ENCODE measurements at regions of chr7 and their contacts with region 1.

Region 1: DNA sequence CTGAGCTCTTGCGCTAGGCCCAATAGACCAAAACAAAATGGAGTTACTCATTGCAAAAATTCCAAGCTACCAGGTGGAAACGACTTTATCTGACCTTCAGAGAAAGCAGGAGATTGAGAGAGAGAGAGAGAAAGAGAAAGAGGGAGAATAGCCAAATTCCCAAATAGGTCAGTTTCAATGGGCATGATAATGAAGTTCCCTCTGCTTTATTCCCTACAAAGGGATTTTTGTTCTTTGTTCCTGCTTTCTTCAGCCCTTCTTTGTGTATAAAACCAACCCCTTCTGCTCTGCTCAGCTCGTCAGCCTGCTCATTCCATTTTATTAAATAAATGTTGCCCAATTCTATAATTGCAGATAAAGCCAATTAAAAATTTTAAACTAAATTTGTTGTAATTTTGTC is 45.0 kb upstream of the GPR37 start:
- DNase-seq: no peak
- ATAC-seq: no peak
- H3K4me3 ChIP-seq: no peak overlapping the region
- H3K27ac ChIP-seq: no peak overlapping the region
- H3K4me1 ChIP-seq: no peaks in the 10 kb centered on the region
- H3K27me3 ChIP-seq: no peaks in the 10 kb centered on the region
- CTCF ChIP-seq: no peak

Region 2: GRCh38 chr7:124836173-124836572 is 25.6 kb after region 1 on chr7:
- intact Hi-C with region 1: loop called in 1 of 10 experiments (anchors 2 kb)
- DNase-seq: no peak
- ATAC-seq: no peak
- H3K4me3 ChIP-seq: no peak overlapping the region
- H3K27ac ChIP-seq: no peak overlapping the region
- H3K4me1 ChIP-seq: no peaks in the 10 kb centered on the region
- H3K27me3 ChIP-seq: no peaks in the 10 kb centered on the region
- CTCF ChIP-seq: no peak

Region 3: DNA sequence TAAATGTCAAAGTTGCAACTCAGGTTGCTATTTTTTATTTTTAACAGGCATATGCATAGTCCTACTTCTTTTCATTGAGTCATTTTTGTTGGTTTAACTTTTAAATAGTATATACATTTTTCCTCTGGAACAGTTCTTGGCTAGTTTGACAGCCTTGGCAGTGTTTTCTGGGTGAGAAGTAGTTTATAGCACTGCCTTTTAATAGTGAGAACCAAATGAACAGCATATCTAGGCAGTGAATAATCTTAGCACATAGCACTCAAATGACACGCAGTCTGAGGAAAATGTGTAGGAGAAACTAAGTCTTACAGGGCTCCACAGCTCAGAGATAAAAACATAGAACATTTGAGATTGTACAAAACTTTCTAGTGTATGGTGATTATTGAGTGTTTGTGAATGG is 384.6 kb after region 1 on chr7:
- intact Hi-C with region 1: no loop called
- DNase-seq: no peak
- ATAC-seq: no peak
- H3K4me3 ChIP-seq: no peak overlapping the region
- H3K27ac ChIP-seq: no peak overlapping the region
- H3K4me1 ChIP-seq: no peaks in the 10 kb centered on the region
- H3K27me3 ChIP-seq: no peaks in the 10 kb centered on the region
- CTCF ChIP-seq: no peak

Measured in heart right ventricle (tissue), 16 donors.